ENCODE measurements at regions of chr1 and their contacts with region 1.

Region 1: DNA sequence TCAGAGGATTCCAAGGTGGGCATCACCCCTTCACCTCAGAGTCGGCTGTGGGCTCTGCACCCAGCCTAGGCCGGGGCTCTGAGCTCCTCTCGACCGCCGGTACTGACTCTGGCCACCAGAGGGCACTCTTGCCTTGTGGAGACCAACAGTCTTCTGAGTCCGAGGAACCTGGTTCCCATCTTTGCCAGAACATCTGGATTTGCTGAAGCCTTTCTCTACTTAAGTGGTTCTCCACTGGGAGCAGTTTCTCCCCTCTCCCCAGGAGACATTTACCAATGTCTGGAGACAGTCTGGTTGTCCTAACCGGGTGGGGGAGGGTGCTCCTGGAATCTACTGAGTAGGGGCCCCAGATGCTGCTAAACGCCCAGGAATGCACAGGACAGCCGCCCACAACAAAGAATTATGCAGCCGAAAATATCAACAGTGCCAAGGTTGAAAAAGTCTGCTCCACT is 9.4 kb downstream of the ETV3L start:
- DNase-seq: peak; percentile 55
- ATAC-seq: peak; percentile 98
- H3K4me3 ChIP-seq: no peak overlapping the region
- H3K27ac ChIP-seq: no peak overlapping the region
- H3K4me1 ChIP-seq: 0 out of 4 replicates have a peak, but pooled peaks cover 0 to 2% of the 10 kb centered on the region in 2 experiments
- H3K27me3 ChIP-seq: no peaks in the 10 kb centered on the region
- CTCF ChIP-seq: peak; percentile 91 to 98 (median 94)
- POLR2A ChIP-seq: no peak
- RAD21 ChIP-seq: peak; percentile 95

Region 2: DNA sequence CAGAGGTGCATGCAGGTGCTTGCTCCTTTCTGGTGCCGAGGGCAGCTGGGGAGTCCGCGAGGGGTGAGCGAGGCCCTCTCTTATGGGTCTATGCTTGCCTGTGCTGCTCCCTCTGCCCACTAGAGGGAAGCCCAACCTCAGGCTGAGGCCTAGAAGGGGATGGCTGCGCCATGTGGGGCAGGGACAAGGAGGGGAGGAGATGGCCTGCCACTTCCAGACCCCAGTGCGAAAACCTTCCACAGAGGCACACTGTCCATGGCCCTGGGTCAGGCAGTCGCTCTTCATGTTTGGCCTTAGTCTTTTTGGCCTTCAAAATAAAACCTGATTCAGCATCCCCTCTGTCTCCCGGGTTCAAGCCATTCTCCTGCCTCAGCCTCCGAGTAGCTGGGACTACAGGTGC is 707.2 kb before region 1 on chr1:
- CTCF ChIA-PET with region 1: no interaction called
- POLR2A ChIA-PET with region 1: no interaction called
- RAD21 ChIA-PET with region 1: no interaction called
- intact Hi-C with region 1: no loop called
- DNase-seq: peak; percentile 45
- ATAC-seq: peak; percentile 91
- H3K4me3 ChIP-seq: no peak overlapping the region
- H3K27ac ChIP-seq: no peak overlapping the region
- H3K4me1 ChIP-seq: peaks cover 8 to 9% of the 10 kb centered on the region in 2 experiments
- H3K27me3 ChIP-seq: no peaks in the 10 kb centered on the region
- CTCF ChIP-seq: peak; percentile 87 to 92 (median 91)
- POLR2A ChIP-seq: no peak
- RAD21 ChIP-seq: peak; percentile 94

Region 3: GRCh38 chr1:157073944-157074767 is 16.1 kb before region 1 on chr1:
- CTCF ChIA-PET with region 1: interaction called, 10 read pairs
- POLR2A ChIA-PET with region 1: no interaction called
- RAD21 ChIA-PET with region 1: interaction called in 1 of 2 experiments, 3 read pairs
- intact Hi-C with region 1: no loop called
- DNase-seq: peak; percentile 41
- ATAC-seq: peak; percentile 92
- H3K4me3 ChIP-seq: peak overlapping the region in 1 of 2 experiments; percentile 7; a peak in 1 of 4 replicates
- H3K27ac ChIP-seq: no peak overlapping the region
- H3K4me1 ChIP-seq: peaks cover 0 to 9% of the 10 kb centered on the region in 2 experiments; a peak in 1 of 4 replicates
- H3K27me3 ChIP-seq: no peaks in the 10 kb centered on the region
- CTCF ChIP-seq: peak; percentile 40 to 69 (median 63); a peak in 5 of 6 replicates
- POLR2A ChIP-seq: no peak
- RAD21 ChIP-seq: peak; percentile 63

Region 4: DNA sequence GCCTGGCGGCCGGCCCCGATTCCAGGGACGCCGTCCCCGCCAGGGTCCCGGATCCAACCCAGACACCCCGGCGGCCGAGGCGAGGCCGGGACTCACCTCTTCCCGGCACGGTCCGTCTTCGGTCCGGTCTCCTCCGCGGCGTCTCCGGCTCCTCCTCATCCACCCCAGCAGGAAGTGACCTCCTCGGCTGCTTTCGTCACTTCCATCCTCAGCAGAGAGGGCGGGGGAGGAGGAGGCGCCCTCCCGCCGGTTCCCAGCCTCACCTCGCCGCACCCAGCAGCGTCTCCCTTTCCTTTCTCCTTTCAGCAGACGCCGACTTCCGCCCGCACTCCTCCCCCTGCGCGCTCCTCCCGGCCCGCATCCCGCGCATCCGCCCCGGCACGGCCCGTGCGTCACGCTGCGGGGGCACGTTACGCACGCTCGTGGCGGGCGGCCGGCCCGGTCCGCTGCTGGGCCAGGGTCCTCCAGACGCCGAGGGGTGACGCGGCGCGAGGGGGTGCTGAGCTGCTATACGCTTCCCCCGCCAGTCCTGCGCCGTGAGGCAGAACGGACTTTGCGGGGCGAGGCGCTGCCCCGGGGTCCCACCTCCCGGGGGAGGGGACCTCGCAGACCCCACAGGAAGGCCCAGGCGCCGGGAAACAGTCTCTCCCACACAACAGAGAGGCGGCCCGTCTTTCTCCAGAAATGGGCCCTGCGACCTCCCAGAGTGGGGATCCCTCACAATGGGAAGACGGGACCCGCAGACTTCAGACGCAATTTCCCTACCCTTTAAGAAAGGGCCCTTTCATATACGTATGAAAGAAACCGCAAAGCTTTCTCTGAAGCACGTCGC is 48.2 kb after region 1 on chr1 and contains the start of gene ETV3:
- CTCF ChIA-PET with region 1: interaction called, 12 read pairs
- POLR2A ChIA-PET with region 1: no interaction called
- RAD21 ChIA-PET with region 1: no interaction called
- intact Hi-C with region 1: loop called (anchors 5 kb)
- DNase-seq: peak; percentile 76
- ATAC-seq: peak; percentile 92
- H3K4me3 ChIP-seq: peak within 1 kb of the TSS; percentile 91 to 94
- H3K27ac ChIP-seq: peak within 1 kb of the TSS; percentile 60
- H3K4me1 ChIP-seq: peaks cover 13 to 25% of the 10 kb centered on the region in 2 experiments
- H3K27me3 ChIP-seq: no peaks in the 10 kb centered on the region
- CTCF ChIP-seq: no peak
- POLR2A ChIP-seq: peak; percentile 37
- RAD21 ChIP-seq: no peak
- total RNA-seq, gene ETV3: 21.2 TPM

Region 5: GRCh38 chr1:157156058-157156541 is 65.9 kb after region 1 on chr1:
- CTCF ChIA-PET with region 1: interaction called, 140 read pairs
- POLR2A ChIA-PET with region 1: interaction called, 8 read pairs
- RAD21 ChIA-PET with region 1: interaction called, 22 to 30 read pairs
- intact Hi-C with region 1: loop called (anchors 1 kb)
- DNase-seq: peak; percentile 48
- ATAC-seq: peak; percentile 93
- H3K4me3 ChIP-seq: peak overlapping the region; percentile 23 to 32; a peak in 3 of 4 replicates
- H3K27ac ChIP-seq: no peak overlapping the region
- H3K4me1 ChIP-seq: peaks cover 8 to 29% of the 10 kb centered on the region in 2 experiments; a peak in 3 of 4 replicates
- H3K27me3 ChIP-seq: no peaks in the 10 kb centered on the region
- CTCF ChIP-seq: peak; percentile 88 to 97 (median 91)
- POLR2A ChIP-seq: no peak
- RAD21 ChIP-seq: peak; percentile 92

Region 6: DNA sequence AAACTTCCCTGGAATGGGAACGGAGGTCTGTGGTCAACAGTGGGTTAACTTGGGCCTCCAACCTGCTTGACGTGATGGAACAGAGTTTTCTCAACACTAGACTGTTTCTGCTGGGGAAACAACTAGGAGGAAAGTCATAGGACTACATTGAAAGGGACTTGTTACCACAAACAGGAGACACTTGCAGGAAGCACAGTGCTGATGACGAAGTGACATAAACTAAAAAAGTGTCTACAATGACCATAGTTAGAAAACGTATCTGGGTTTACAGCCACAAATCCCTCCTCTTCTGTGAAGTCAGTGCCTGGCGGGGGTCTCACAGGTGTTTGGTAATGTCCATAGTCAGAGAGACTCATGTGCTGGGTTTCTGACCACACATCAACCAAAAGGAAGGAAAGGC is 375.8 kb after region 1 on chr1:
- CTCF ChIA-PET with region 1: no interaction called
- POLR2A ChIA-PET with region 1: no interaction called
- RAD21 ChIA-PET with region 1: no interaction called
- intact Hi-C with region 1: no loop called
- DNase-seq: no peak
- ATAC-seq: no peak
- H3K4me3 ChIP-seq: no peak overlapping the region
- H3K27ac ChIP-seq: no peak overlapping the region
- H3K4me1 ChIP-seq: no peaks in the 10 kb centered on the region
- H3K27me3 ChIP-seq: no peaks in the 10 kb centered on the region
- CTCF ChIP-seq: no peak
- POLR2A ChIP-seq: no peak
- RAD21 ChIP-seq: no peak

Region 7: GRCh38 chr1:157496121-157496526 is 405.9 kb after region 1 on chr1:
- CTCF ChIA-PET with region 1: no interaction called
- POLR2A ChIA-PET with region 1: no interaction called
- RAD21 ChIA-PET with region 1: no interaction called
- intact Hi-C with region 1: no loop called
- DNase-seq: peak; percentile 26
- ATAC-seq: peak; percentile 89
- H3K4me3 ChIP-seq: no peak overlapping the region
- H3K27ac ChIP-seq: no peak overlapping the region
- H3K4me1 ChIP-seq: no peaks in the 10 kb centered on the region
- H3K27me3 ChIP-seq: peaks cover 36% of the 10 kb centered on the region
- CTCF ChIP-seq: peak; percentile 71 to 85 (median 83); a peak in 5 of 6 replicates
- POLR2A ChIP-seq: no peak
- RAD21 ChIP-seq: peak; percentile 64